GM10248 (cell line): ENCODE measurements at regions of chr20 and their contacts with region 1.

Region 1: DNA sequence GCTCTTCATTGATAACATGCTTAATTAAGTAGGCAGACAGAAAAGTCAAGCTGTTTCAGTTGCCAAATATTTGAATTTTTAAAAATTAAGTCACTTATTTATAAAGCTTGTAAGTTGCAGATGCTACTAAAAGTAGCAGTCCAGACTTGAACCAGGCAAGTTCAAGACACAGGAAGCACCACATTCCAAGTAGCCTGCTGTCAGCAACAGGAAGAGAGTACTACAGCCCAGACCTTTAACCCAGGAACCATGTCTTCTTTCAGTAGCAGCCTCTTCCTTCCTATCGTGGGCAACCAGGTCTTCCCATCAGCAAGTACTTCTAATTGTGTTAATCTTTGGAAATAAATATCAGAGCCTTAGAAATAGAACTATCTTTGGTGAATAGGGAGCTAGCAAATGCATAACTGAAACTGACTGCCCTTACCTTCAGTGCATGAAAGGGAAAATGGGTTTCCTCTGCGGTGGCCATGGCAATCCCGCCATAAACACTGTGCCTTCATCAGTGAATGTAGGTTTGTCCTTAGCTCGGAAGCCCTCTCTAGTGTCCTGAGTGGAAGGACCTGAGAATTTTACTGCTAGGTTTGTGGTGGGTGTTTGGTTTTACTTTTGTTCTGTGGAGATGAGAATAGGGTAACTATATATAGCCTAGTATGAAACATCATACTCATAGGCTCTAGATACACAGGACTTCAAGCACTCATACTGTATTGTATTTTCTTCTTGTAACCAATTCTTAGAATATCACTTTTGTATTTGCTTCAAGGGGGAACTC is 95.6 kb downstream of the SYCP2 start:
- DNase-seq: peak; percentile 24
- CTCF ChIP-seq: no peak

Region 2: GRCh38 chr20:59850018-59850641 is 12.3 kb after region 1 on chr20:
- CTCF ChIA-PET with region 1: interaction called, 28 read pairs
- POLR2A ChIA-PET with region 1: no interaction called
- DNase-seq: no peak
- CTCF ChIP-seq: peak; percentile 45